Activated naive CD4-positive, alpha-beta T cell treated with anti-CD3 and anti-CD28 coated beads for 36 hours (primary cell): ENCODE measurements at regions of chr7 and their contacts with region 1.

Region 1: GRCh38 chr7:142587578-142588191 is 161.6 kb upstream of the PRSS1 start:
- DNase-seq: no peak
- H3K4me3 Mint-ChIP-seq: peak overlapping the region; percentile 44
- H3K27ac Mint-ChIP-seq: peak overlapping the region; percentile 70
- H3K4me1 Mint-ChIP-seq: peaks cover 12% of the 10 kb centered on the region
- H3K27me3 Mint-ChIP-seq: no peaks in the 10 kb centered on the region

Region 2: DNA sequence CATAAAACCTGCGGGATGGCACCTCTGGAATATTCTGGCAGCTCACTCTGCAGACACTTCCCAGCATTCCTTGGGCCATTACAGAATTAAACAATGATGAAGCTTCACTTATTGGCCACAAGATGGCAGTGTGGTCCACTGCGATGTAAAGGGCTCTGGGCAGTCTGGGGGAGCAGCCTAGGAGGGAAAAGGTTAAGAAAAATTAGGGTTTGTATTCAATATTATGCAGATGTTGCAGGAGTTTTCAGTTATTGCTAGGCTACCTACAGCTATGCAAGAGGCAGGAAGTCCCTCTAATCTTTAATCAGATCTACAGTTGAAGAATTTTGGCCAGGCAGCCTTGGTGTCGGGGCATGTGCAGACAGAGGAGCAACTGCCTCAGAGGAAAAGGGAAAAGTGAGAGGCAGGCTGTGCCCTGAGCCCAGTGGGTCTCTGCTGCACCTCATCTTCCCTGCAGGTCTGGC is 71.6 kb before region 1 on chr7:
- CTCF ChIA-PET with region 1: interaction called, 6 read pairs
- intact Hi-C with region 1: loop called (anchors 1 kb)
- DNase-seq: peak; percentile 54
- H3K4me3 Mint-ChIP-seq: no peak overlapping the region
- H3K27ac Mint-ChIP-seq: peak overlapping the region; percentile 41
- H3K4me1 Mint-ChIP-seq: peaks cover 53% of the 10 kb centered on the region
- H3K27me3 Mint-ChIP-seq: no peaks in the 10 kb centered on the region

Region 3: GRCh38 chr7:142557971-142558582 is 29.6 kb before region 1 on chr7:
- CTCF ChIA-PET with region 1: interaction called, 20 read pairs
- intact Hi-C with region 1: loop called (anchors 1 kb)
- DNase-seq: peak; percentile 73
- H3K4me3 Mint-ChIP-seq: peak overlapping the region; percentile 58
- H3K27ac Mint-ChIP-seq: peak overlapping the region; percentile 79
- H3K4me1 Mint-ChIP-seq: peaks cover 8% of the 10 kb centered on the region
- H3K27me3 Mint-ChIP-seq: peaks cover 4% of the 10 kb centered on the region

Region 4: GRCh38 chr7:142611566-142612236 is 24.0 kb after region 1 on chr7:
- CTCF ChIA-PET with region 1: no interaction called
- intact Hi-C with region 1: no loop called
- DNase-seq: no peak
- H3K4me3 Mint-ChIP-seq: no peak overlapping the region
- H3K27ac Mint-ChIP-seq: peak overlapping the region; percentile 85
- H3K4me1 Mint-ChIP-seq: peaks cover 43% of the 10 kb centered on the region
- H3K27me3 Mint-ChIP-seq: no peaks in the 10 kb centered on the region